Sigmoid colon (tissue), 7 donors: ENCODE measurements at regions of chr16 and their contacts with region 1.

Region 1: DNA sequence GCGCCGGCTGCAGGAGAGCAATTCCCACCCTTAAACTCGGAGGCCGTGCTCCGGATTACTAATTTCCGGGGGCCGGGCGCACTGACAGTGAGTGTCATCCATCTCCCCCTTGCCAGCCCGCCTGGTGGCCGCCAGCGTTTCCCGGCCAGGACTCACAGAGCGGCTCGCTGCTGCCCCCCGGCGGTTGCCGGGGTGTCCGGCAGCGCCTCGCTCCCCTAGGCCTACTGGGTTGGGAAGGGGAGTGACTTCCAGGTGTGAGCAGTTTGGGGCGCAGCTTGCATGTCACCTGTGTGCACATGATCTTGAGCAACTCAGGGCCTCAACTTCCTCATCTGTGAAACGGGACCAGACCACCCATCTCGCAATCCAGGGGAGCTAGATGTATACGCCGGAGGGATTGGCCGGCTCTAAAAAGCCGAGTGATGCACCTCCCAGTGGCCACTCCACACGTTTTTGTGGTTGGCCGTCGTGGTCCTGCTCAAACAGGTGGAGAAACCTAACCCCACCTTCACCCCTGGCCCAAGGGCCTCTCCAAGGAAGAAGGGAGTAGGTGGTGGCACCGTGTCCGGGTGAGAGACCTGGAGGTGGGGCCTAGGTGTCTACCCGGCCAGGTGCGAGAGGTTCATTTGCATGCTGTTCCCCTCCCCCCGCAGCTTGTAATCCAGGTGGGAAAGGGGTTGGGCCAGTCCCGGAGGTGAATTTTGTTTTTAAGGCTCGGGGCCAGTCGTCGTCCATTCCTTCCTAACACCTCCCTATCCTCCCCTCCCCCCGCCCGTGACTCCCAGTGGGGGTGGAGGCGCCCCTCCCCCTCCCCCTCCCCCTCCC is 2.4 kb upstream of the GSE1 start:
- DNase-seq: peak; percentile 96
- H3K4me3 ChIP-seq: peak overlapping the region; percentile 51 to 71 (median 68)
- H3K27ac ChIP-seq: peak overlapping the region; percentile 93 to 97 (median 95)
- H3K4me1 ChIP-seq: peaks cover 0 to 93% (median 85%) of the 10 kb centered on the region in 4 donors
- H3K27me3 ChIP-seq: no peaks in the 10 kb centered on the region
- CTCF ChIP-seq: peak; percentile 98 to 99 (median 98)
- EP300 ChIP-seq: no peak
- POLR2A ChIP-seq: no peak

Region 2: GRCh38 chr16:85305996-85306792 is 304.5 kb before region 1 on chr16:
- intact Hi-C with region 1: loop called (anchors 10 kb)
- DNase-seq: peak; percentile 96
- H3K4me3 ChIP-seq: no peak overlapping the region
- H3K27ac ChIP-seq: peak overlapping the region in 3 of 4 donors; percentile 8 to 46 (median 45)
- H3K4me1 ChIP-seq: peaks cover 0 to 63% (median 39%) of the 10 kb centered on the region in 4 donors
- H3K27me3 ChIP-seq: no peaks in the 10 kb centered on the region
- CTCF ChIP-seq: no peak
- EP300 ChIP-seq: no peak
- POLR2A ChIP-seq: no peak

Region 3: DNA sequence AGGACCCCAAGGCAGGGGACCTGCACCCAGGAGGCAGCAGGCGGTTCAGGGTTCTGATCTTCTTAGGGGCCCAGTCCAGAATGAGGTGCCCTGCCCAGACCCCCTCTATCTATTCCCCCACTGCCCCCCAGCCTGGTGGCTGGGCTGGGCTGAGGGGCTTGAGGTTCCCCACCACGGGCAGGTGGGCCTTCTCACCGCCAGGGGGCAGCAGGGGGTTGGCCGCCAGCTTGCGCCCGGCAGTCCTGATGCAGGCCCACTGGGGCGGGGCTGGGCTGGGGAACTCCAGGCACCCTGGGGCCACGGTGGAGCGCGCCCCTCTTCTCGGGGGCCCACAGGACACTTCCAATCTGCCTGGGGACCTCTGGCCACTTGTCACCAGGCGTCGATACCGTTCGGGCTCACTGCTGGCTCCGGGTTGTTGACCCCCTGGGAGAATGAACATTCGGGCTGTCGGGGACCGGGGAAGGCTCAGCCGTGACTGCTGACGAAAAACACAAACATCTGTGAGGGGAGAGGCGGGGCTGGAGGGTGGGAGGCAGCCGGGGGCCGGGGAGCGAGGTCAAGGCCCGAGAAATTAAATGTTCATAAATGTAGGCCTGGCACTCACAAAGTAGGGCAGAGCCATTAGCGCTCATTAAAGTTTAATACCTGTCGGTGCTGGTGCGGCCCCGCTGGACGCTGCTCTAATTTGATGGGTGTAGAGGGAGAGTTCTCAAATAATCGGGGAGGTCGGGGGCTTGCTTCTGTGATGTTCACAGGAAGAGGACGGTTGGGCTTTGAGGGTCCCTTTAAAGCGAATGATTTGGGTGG is 216.8 kb before region 1 on chr16:
- intact Hi-C with region 1: loop called (anchors 2 kb)
- DNase-seq: peak; percentile 88
- H3K4me3 ChIP-seq: peak overlapping the region in 1 of 4 donors; percentile 11
- H3K27ac ChIP-seq: peak overlapping the region; percentile 81 to 91 (median 86)
- H3K4me1 ChIP-seq: peaks cover 0 to 74% (median 68%) of the 10 kb centered on the region in 4 donors
- H3K27me3 ChIP-seq: no peaks in the 10 kb centered on the region
- CTCF ChIP-seq: peak; percentile 86 to 95 (median 87)
- EP300 ChIP-seq: no peak
- POLR2A ChIP-seq: no peak

Region 4: GRCh38 chr16:85420501-85421337 is 190.0 kb before region 1 on chr16:
- intact Hi-C with region 1: loop called (anchors 1 kb)
- DNase-seq: peak; percentile 72
- H3K4me3 ChIP-seq: no peak overlapping the region
- H3K27ac ChIP-seq: no peak overlapping the region
- H3K4me1 ChIP-seq: peaks cover 0 to 21% (median 19%) of the 10 kb centered on the region in 4 donors
- H3K27me3 ChIP-seq: no peaks in the 10 kb centered on the region
- CTCF ChIP-seq: peak; percentile 92 to 99 (median 98)
- EP300 ChIP-seq: no peak
- POLR2A ChIP-seq: no peak

Region 5: GRCh38 chr16:85461814-85462713 is 148.7 kb before region 1 on chr16:
- intact Hi-C with region 1: loop called (anchors 5 kb)
- DNase-seq: peak; percentile 82
- H3K4me3 ChIP-seq: peak overlapping the region; percentile 26 to 54 (median 46)
- H3K27ac ChIP-seq: peak overlapping the region; percentile 65 to 86 (median 84)
- H3K4me1 ChIP-seq: peaks cover 0 to 79% (median 71%) of the 10 kb centered on the region in 4 donors
- H3K27me3 ChIP-seq: no peaks in the 10 kb centered on the region
- CTCF ChIP-seq: no peak
- EP300 ChIP-seq: no peak
- POLR2A ChIP-seq: no peak

Region 6: DNA sequence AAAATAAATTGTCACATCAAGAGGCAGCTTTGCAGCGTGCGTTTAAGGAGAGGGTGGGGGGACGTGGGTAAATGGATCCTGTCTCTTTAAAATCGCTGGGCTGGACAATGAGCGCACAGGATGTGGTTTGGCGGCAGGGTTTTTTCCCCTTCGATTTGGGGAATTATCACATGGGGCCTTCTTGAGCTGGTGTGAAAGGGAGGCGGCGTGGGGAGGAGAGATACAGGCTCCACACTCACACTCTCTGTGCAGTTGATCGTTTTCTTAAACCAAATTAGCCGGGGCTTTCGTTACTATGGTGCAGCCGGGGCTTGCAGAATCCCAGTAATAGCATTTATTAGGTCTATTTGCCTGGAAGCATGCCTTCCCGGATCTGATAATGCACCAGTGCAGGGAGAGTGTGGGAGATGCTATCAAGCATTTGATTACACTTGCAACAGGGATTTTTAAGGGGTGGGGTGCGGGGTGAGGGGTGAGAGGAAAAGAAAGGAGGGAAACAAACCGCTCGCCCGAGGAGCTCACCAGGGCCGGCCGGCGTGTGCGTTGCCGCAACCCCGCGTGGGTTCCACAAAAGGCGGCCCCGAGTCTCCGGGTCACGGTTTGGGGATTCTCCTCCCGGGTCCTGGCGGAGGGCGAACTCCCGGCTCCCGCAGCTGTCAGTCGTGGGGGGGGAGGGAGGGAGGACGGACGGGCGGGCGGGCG is 56.5 kb before region 1 on chr16:
- intact Hi-C with region 1: loop called (anchors 1 kb)
- DNase-seq: peak; percentile 88
- H3K4me3 ChIP-seq: peak overlapping the region; percentile 62 to 87 (median 80)
- H3K27ac ChIP-seq: peak overlapping the region; percentile 84 to 96 (median 94)
- H3K4me1 ChIP-seq: peaks cover 0 to 58% (median 45%) of the 10 kb centered on the region in 4 donors
- H3K27me3 ChIP-seq: no peaks in the 10 kb centered on the region
- CTCF ChIP-seq: no peak
- EP300 ChIP-seq: no peak
- POLR2A ChIP-seq: peak in 1 of 2 donors; percentile 26